ENCODE measurements at regions of chr2 and their contacts with region 1.

Region 1: GRCh38 chr2:47862949-47863348 is 43.3 kb downstream of the FBXO11 start:
- H3K4me3 ChIP-seq: no peak overlapping the region
- H3K27ac ChIP-seq: no peak overlapping the region
- H3K4me1 ChIP-seq: peaks cover 8% of the 10 kb centered on the region
- CTCF ChIP-seq: no peak

Region 2: DNA sequence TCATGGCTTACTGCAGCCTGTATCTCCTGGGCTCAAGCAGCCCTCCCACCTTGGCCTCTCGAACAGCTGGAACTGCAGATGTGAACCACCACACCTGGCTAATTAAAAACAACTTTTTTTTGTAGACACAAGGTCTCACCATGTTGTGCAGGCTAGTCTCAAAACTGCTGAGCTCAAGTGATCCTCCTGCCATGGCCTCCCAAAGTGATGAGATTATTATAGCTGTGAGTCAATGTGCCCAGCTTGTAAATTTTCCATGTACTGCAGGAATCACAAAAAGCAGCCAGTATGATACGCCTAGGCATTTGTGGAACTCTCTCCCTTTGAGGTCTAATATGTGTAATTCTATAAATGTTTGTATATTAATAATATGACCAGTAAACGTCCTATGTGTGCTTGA is 20.1 kb before region 1 on chr2:
- CTCF ChIA-PET with region 1: interaction called, 10 read pairs
- POLR2A ChIA-PET with region 1: no interaction called
- H3K4me3 ChIP-seq: no peak overlapping the region
- H3K27ac ChIP-seq: no peak overlapping the region
- H3K4me1 ChIP-seq: 0 out of 2 replicates have a peak, but pooled peaks cover 9% of the 10 kb centered on the region
- CTCF ChIP-seq: no peak